ENCODE measurements at regions of chr3 and their contacts with region 1.

Region 1: GRCh38 chr3:182909318-182910040 is 70.9 kb downstream of the DCUN1D1 start:
- DNase-seq: no peak
- ATAC-seq: peak; percentile 31; the same call in 2 of the 3 replicates
- H3K4me3 ChIP-seq: no peak overlapping the region
- H3K27ac ChIP-seq: no peak overlapping the region
- H3K4me1 ChIP-seq: peaks cover 11% of the 10 kb centered on the region
- H3K27me3 ChIP-seq: no peaks in the 10 kb centered on the region
- CTCF ChIP-seq: peak; percentile 34 to 49 (median 48); a peak in 5 of 6 replicates
- EP300 ChIP-seq: no peak
- POLR2A ChIP-seq: no peak
- RAD21 ChIP-seq: peak; percentile 45; the same call in 1 of the 2 replicates

Region 2: DNA sequence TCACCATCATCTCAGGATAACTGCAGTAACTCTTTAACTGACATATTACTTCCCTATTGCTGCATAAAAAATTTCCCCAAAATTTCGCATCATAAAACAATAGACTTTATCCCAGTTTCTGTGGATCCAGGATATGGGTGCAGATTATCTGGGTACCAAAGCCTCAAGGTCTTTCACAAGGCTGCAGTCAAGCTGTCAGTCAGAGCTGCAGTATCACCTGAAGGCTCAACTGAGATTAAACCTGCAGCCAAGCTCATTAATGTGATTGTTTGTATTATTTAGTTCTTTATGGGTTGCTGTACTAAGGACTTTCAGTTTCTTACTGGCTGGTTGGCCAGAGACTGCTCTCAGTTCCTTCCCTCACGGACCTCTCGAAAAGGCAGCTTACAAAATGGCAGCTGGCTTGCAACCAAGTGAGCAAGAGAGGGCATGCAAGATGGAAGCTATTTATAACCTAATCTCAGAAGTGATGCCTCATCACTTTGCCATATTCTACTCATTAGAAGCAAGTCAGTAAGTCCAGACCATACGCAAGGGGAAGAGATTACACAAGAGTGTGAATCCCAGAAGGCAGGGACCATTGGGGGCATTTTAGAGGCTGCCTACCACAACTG is 16.0 kb after region 1 on chr3:
- CTCF ChIA-PET with region 1: interaction called, 8 read pairs
- POLR2A ChIA-PET with region 1: interaction called, 4 read pairs
- RAD21 ChIA-PET with region 1: interaction called, 20 read pairs
- SMC1A ChIA-PET with region 1: interaction called, 34 read pairs
- in situ Hi-C with region 1: no loop called
- intact Hi-C with region 1: no loop called
- DNase-seq: peak; percentile 92
- ATAC-seq: peak; percentile 97
- H3K4me3 ChIP-seq: no peak overlapping the region
- H3K27ac ChIP-seq: peak overlapping the region; percentile 14; the same call in 1 of the 2 replicates
- H3K4me1 ChIP-seq: peaks cover 9% of the 10 kb centered on the region; the same call in 1 of the 2 replicates
- H3K27me3 ChIP-seq: no peaks in the 10 kb centered on the region
- CTCF ChIP-seq: no peak
- EP300 ChIP-seq: peak; percentile 39 to 75; a peak in 3 of 4 replicates
- POLR2A ChIP-seq: no peak; the same call in 1 of the 2 replicates
- RAD21 ChIP-seq: no peak

Region 3: DNA sequence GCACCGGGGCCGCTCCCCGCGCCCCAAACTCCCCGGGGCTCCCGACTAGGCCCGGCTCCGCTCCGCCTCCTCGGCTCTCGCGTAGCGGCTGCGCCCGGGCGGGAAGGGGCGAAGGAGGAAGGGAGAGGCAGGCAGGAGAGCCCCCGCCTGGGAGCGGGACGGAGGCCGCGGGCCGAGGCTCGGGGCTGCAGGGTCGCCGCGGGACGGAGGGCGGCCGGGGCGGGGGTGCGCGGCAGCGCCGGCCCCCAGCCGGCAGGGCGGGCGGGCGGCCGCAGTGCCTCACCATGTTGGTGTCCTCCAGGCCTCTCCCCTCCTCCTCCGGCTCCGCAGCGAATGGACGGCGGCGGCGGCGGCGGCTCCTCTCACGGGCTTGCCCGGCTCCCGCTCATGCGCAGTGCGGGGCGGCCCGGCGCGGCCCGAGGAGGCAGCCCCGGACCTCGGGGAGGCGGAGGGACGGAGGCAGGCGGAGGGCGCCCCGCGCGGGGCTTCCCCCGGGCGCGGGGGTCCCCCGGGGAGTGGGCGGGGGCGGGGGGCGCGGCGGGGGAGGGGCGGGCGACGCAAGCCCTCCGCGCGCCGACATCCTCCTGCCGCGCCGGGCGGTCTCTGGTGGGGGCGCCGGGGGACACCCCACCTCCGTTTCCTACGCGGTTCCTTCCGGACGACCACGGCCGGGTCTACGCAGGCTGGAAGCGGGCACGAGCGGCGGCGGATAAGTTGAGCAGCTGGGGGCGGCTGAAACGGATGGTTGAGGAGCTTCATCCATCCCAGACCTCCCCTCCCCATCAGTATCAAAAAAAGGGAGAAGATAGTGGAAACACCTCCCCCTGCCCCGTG is 70.9 kb after region 1 on chr3 and contains the start of gene DCUN1D1:
- CTCF ChIA-PET with region 1: interaction called, 12 read pairs
- POLR2A ChIA-PET with region 1: interaction called, 3 read pairs
- RAD21 ChIA-PET with region 1: no interaction called
- SMC1A ChIA-PET with region 1: interaction called, 3 read pairs
- in situ Hi-C with region 1: no loop called
- intact Hi-C with region 1: no loop called
- DNase-seq: peak; percentile 19
- ATAC-seq: peak; percentile 91
- H3K4me3 ChIP-seq: peak within 1 kb of the TSS; percentile 85
- H3K27ac ChIP-seq: peak within 1 kb of the TSS; percentile 53
- H3K4me1 ChIP-seq: peaks cover 9% of the 10 kb centered on the region
- H3K27me3 ChIP-seq: no peaks in the 10 kb centered on the region
- CTCF ChIP-seq: no peak
- EP300 ChIP-seq: no peak
- POLR2A ChIP-seq: peak; percentile 84
- RAD21 ChIP-seq: no peak
- polyA plus RNA-seq, gene DCUN1D1: 19.8 to 47.4 TPM

Region 4: DNA sequence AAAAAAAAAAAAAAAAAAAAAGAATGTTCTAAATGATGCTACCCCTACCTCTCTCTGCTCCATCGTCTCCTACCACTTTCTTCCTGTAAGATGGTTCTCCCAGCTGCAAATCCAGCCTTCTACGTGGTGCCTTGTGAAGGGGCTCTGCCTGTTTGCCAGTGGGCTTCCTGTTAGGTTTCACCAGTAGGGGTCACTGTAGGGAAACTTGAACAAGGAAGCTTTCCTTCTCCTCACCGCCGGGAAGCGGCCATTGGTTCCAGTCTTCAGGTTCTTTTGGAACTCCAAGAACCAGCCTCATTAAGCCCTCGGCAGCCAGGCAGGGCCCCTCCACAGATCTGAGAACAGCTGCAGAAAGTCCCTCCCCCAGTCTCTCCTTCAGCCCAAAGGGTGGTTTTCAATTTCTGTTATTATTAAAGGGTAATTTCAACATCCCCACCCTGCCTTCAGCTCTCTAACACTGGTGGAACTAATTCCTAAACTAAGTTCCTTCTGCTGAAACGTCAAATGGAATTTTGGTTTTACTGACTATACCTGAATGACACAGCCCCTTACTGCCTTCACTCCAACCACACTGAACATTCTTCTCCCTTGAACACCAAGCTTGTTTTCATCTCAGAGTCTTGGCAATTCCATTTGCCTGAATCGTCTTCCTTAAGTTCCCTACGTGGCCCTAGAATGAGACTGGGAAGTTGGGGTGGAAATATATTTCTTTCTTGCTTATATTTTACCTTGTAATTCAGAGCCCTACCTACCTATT is 176.3 kb after region 1 on chr3:
- CTCF ChIA-PET with region 1: interaction called, 21 read pairs
- POLR2A ChIA-PET with region 1: no interaction called
- RAD21 ChIA-PET with region 1: no interaction called
- SMC1A ChIA-PET with region 1: interaction called, 4 read pairs
- in situ Hi-C with region 1: no loop called
- intact Hi-C with region 1: no loop called
- DNase-seq: no peak
- ATAC-seq: peak; percentile 54
- H3K4me3 ChIP-seq: no peak overlapping the region
- H3K27ac ChIP-seq: no peak overlapping the region
- H3K4me1 ChIP-seq: no peaks in the 10 kb centered on the region
- H3K27me3 ChIP-seq: no peaks in the 10 kb centered on the region
- CTCF ChIP-seq: peak; percentile 26 to 50 (median 36); a peak in 5 of 6 replicates
- EP300 ChIP-seq: no peak
- POLR2A ChIP-seq: no peak
- RAD21 ChIP-seq: peak; percentile 23; the same call in 1 of the 2 replicates

Region 5: DNA sequence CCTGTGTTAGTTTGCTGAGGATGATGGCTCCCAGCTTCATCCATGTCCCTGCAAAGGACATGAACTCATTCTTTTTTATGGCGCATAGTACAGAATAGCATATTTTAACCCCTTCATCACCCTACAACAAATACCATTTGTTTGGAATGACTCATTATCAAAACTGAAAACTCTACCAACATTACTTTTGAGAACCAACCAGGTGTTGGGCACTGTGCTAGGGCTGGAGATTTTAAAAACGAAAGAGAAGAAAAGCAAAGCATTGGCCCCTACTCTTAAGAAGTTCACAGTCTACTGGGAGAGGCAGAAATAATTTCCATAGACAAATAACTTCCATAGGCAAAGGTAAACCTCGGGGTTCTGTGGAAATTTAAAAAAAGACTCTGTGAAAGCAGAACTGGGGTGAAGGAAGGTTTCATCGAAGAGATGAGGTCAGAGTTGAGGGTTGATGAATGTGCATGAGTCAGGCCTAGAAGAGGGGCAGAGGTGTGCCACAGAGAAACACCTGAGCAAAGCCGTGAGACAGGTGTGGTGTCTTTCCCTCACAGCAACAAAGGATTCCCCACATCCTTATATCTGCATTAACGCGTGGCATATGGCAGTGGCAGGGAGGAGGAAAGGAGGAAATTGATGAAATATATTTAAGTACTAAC is 468.0 kb after region 1 on chr3:
- CTCF ChIA-PET with region 1: interaction called, 13 read pairs
- POLR2A ChIA-PET with region 1: no interaction called
- RAD21 ChIA-PET with region 1: interaction called, 4 read pairs
- SMC1A ChIA-PET with region 1: interaction called, 3 read pairs
- in situ Hi-C with region 1: no loop called
- intact Hi-C with region 1: loop called (anchors 2 kb)
- DNase-seq: no peak
- ATAC-seq: peak; percentile 46
- H3K4me3 ChIP-seq: no peak overlapping the region
- H3K27ac ChIP-seq: no peak overlapping the region
- H3K4me1 ChIP-seq: peaks cover 11% of the 10 kb centered on the region; the same call in 1 of the 2 replicates
- H3K27me3 ChIP-seq: no peaks in the 10 kb centered on the region
- CTCF ChIP-seq: no peak
- EP300 ChIP-seq: no peak
- POLR2A ChIP-seq: no peak
- RAD21 ChIP-seq: no peak

Region 6: DNA sequence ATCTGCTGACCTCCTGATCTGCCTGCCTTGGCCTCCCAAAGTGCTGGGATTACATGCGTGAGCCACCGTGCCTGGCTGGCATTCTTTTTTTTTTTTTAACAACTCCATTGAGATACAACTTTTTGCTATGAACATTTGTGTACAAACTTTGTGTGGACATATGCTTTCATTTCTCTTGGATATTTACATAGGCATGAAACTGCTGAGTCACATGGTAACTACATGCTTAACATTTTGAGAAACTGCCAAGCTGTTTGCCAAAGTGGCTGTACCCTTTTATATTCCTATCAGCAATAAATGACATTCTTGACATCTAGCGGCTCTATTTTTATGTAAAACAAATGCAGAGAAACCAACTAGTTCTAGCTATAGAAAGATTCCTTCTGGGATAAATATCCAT is 779.4 kb after region 1 on chr3:
- CTCF ChIA-PET with region 1: no interaction called
- POLR2A ChIA-PET with region 1: no interaction called
- RAD21 ChIA-PET with region 1: no interaction called
- SMC1A ChIA-PET with region 1: no interaction called
- in situ Hi-C with region 1: no loop called
- intact Hi-C with region 1: no loop called
- DNase-seq: no peak
- ATAC-seq: no peak
- H3K4me3 ChIP-seq: no peak overlapping the region
- H3K27ac ChIP-seq: no peak overlapping the region
- H3K4me1 ChIP-seq: no peaks in the 10 kb centered on the region
- H3K27me3 ChIP-seq: no peaks in the 10 kb centered on the region
- CTCF ChIP-seq: no peak
- EP300 ChIP-seq: no peak
- POLR2A ChIP-seq: no peak
- RAD21 ChIP-seq: no peak